ENCODE measurements at regions of chr13 and their contacts with region 1.

Region 1: GRCh38 chr13:72643311-72643989 is 84.0 kb downstream of the MZT1 start:
- DNase-seq: peak; percentile 60
- H3K4me3 Mint-ChIP-seq: no peak overlapping the region
- H3K27ac Mint-ChIP-seq: no peak overlapping the region
- H3K4me1 Mint-ChIP-seq: no peaks in the 10 kb centered on the region
- H3K27me3 Mint-ChIP-seq: no peaks in the 10 kb centered on the region

Region 2: GRCh38 chr13:72656357-72656756 is 12.9 kb after region 1 on chr13:
- CTCF ChIA-PET with region 1: interaction called, 10 read pairs
- POLR2A ChIA-PET with region 1: no interaction called
- intact Hi-C with region 1: no loop called
- DNase-seq: no peak
- H3K4me3 Mint-ChIP-seq: no peak overlapping the region
- H3K27ac Mint-ChIP-seq: no peak overlapping the region
- H3K4me1 Mint-ChIP-seq: no peaks in the 10 kb centered on the region
- H3K27me3 Mint-ChIP-seq: peaks cover 21% of the 10 kb centered on the region

Region 3: GRCh38 chr13:72920097-72920496 is 276.6 kb after region 1 on chr13:
- CTCF ChIA-PET with region 1: no interaction called
- POLR2A ChIA-PET with region 1: no interaction called
- intact Hi-C with region 1: no loop called
- DNase-seq: no peak
- H3K4me3 Mint-ChIP-seq: no peak overlapping the region
- H3K27ac Mint-ChIP-seq: no peak overlapping the region
- H3K4me1 Mint-ChIP-seq: peaks cover 3% of the 10 kb centered on the region
- H3K27me3 Mint-ChIP-seq: no peaks in the 10 kb centered on the region

Measured in activated CD4-positive, alpha-beta memory T cell treated with anti-CD3 and anti-CD28 coated beads for 36 hours (primary cell).